Esophagus muscularis mucosa (tissue), 4 donors: ENCODE measurements at regions of chr3 and their contacts with region 1.

Region 1: GRCh38 chr3:190321789-190322603 is at the start of gene CLDN1:
- DNase-seq: no peak
- H3K4me3 ChIP-seq: peak within 1 kb of the TSS; percentile 58 to 73 (median 59)
- H3K27ac ChIP-seq: no peak within 1 kb of the TSS
- H3K4me1 ChIP-seq: peaks cover 11 to 26% (median 20%) of the 10 kb centered on the region in 4 donors
- H3K27me3 ChIP-seq: peaks cover 0 to 9% (median 0%) of the 10 kb centered on the region in 4 donors
- CTCF ChIP-seq: peak in 2 of 3 experiments; percentile 83 to 97
- EP300 ChIP-seq: no peak
- POLR2A ChIP-seq: no peak
- total RNA-seq, gene CLDN1: 0.92 to 1.2 (median 0.99) TPM in 3 of 4 donors, not detected in the other

Region 2: GRCh38 chr3:189961525-189962161 is 360.4 kb before region 1 on chr3:
- intact Hi-C with region 1: loop called (anchors 5 kb)
- DNase-seq: no peak
- H3K4me3 ChIP-seq: no peak overlapping the region
- H3K27ac ChIP-seq: peak overlapping the region in 3 of 4 donors; percentile 10 to 52 (median 28)
- H3K4me1 ChIP-seq: peaks cover 5 to 12% (median 10%) of the 10 kb centered on the region in 4 donors
- H3K27me3 ChIP-seq: no peaks in the 10 kb centered on the region
- CTCF ChIP-seq: peak; percentile 88 to 93 (median 91)
- EP300 ChIP-seq: no peak
- POLR2A ChIP-seq: no peak

Region 3: DNA sequence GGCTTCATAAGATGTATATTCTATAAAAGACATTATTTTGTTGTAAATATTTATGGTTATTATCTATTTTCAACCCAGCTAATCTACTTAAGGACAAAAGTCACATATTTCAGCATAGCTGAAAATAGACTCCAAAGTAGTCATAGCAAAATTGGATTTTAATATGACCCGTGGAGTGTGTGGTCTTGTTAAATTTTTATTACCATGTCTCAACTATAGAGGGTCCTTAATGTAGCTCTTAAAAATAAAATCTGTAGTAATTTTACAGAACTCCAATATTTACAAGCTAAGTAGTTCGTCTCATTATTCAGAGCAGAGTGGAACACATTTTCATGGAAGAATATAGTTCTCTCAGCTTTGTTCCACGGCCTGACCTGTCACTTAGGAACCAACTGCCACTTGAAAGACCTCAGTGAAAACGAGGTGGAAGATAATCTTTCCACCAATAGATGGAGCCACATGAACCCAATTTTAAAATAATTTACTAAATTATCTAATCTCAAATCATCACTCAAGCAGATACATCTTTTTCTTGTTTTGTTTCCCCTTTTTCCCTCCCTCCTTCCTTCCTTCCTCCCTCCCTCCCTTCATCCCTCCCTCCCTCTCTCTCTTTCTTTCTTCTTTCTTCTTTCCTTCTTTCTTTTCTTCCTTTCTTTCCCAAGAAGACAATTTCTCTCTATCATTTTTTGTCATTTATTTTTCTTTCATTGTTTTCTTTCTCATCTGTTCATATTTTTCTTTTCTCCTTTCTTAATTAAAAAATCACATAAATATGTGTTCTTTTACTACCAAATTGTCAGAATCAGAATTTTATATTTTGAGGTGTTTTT is 96.9 kb before region 1 on chr3:
- intact Hi-C with region 1: loop called (anchors 5 kb)
- DNase-seq: no peak
- H3K4me3 ChIP-seq: no peak overlapping the region
- H3K27ac ChIP-seq: no peak overlapping the region
- H3K4me1 ChIP-seq: no peaks in the 10 kb centered on the region
- H3K27me3 ChIP-seq: no peaks in the 10 kb centered on the region
- CTCF ChIP-seq: peak in 2 of 3 experiments; percentile 45 to 47
- EP300 ChIP-seq: no peak
- POLR2A ChIP-seq: no peak

Region 4: DNA sequence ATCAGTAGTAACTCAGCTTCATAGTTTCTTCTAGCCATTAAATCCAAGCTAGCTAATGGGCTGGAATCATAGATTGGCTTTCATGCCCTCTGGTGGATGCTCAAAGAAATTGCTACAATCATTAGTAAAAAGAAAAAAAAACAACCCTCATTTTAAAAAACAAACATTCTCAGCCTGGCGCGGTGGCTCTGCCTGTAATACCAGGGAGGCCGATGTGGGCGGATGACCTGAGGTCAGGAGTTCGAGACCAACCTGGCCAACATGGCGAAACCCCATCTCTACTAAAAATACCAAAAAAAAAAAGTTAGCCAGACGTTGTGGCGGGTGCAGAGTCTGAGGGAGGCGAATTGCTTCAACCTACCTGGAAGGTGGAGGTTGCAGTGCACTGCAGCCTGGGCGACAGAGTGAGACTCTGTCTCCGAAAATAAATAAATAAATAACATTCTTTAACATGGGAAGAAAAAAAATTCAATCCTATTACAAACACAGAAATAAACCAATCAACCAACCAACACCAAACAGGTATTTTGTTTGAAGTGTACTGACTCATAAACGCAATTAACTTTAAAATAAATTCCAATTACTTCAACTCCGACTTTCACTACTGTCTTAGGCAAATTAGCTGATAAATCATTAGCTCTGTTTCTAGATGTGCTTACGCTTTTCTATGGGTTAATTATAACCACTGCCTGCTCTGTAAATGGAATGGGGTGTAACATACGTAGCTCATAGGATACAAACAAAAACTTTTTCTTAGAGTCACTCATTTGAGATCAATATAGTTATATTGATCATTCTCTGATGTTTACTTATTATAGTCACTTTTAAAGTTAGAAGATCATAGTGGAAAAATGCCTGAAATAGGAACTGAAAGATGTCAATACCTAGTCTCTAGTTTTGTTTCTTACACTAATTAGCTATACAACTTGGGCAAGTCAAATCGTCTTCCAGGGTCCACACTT is 102.8 kb after region 1 on chr3:
- intact Hi-C with region 1: loop called (anchors 10 kb)
- DNase-seq: no peak
- H3K4me3 ChIP-seq: no peak overlapping the region
- H3K27ac ChIP-seq: no peak overlapping the region
- H3K4me1 ChIP-seq: no peaks in the 10 kb centered on the region
- H3K27me3 ChIP-seq: no peaks in the 10 kb centered on the region
- CTCF ChIP-seq: peak; percentile 50 to 67 (median 66)
- EP300 ChIP-seq: no peak
- POLR2A ChIP-seq: no peak